MCF 10A (cell line): ENCODE measurements at regions of chr11 and their contacts with region 1.

Region 1: DNA sequence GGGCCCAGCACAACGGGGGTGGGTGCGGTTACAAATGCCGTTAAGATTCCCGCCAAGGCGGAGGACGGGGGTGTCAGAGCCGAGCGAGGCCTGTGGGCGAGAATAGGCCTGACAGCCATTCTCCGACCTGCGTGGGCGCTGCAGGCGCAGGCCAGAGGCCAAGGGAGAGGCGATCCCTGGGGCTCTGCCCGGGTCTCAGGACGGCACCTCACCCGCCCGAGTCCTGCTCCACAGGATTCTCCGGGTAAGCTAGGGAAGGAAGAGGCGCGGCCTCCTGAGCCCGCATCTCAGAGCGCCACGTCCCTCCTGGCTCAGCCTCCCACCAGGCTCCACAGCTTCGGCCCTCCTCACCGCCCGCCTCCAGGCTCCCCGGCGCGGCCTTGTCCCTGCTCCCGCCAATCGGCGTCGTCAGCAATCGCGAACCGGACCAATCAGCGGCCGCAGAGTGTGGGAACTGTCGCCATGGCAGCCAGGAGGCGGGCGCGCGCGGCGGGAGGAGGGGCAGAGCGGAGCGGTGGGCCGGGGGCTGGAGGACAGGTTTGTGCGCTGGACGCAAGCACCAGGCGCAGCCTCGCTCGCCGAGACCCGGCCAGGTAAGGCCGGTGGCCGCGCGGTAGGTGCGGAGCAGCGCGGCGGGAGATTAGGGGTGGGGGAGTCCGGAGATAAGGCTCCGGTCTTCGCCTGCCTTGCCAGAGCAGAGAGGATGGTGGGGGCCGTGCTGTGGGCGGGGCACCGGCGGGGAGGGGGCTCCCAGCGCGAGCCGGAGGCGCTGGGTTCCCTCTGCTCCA is at the start of gene NUCB2:
- DNase-seq: peak; percentile 96
- H3K4me3 Mint-ChIP-seq: peak within 1 kb of the TSS; percentile 98
- H3K27ac Mint-ChIP-seq: peak within 1 kb of the TSS; percentile 77
- H3K4me1 Mint-ChIP-seq: peaks cover 9% of the 10 kb centered on the region
- H3K27me3 Mint-ChIP-seq: no peaks in the 10 kb centered on the region
- CTCF ChIP-seq: no peak
- total RNA-seq, gene NUCB2: 89.4 and 137 TPM in 2 replicates

Region 2: DNA sequence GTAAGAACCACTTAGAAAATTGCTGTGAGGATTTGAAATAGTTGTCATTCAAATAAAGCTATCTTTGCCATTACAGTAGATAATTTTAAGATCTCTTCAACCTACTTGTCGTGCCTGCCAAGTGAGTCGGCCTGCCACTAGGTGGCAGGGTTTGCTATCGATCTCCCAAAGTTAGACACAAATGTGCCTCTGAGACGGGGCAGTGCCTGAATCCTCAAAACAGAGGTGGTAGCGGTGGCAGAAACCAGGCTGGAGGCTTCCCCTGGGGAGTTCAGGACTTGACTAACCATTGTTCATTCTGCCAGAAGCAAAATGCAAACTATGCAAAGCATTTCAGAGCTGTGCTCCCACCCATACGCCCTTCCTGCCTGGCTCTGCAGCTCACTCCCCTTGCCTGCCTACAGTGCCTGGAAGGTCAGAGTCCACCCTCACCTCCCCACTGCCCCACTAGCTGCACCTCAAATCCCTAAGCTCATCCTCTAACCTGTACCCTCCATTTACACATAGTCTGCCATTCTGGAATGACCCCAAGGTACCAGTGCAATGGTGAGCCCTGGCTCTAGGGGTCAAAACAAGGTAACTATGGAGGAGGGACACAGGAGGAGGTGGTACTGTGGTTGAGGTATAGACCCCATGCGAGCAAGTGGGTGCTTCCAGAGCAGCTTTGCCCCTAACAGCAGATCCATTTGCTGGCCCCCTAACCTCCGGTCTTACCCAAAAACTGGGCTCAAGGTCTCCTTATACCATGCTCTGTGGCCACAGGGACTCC is 455.9 kb before region 1 on chr11:
- CTCF ChIA-PET with region 1: no interaction called
- POLR2A ChIA-PET with region 1: no interaction called
- intact Hi-C with region 1: no loop called
- DNase-seq: peak; percentile 78
- H3K4me3 Mint-ChIP-seq: no peak overlapping the region
- H3K27ac Mint-ChIP-seq: no peak overlapping the region
- H3K4me1 Mint-ChIP-seq: peaks cover 5% of the 10 kb centered on the region
- H3K27me3 Mint-ChIP-seq: no peaks in the 10 kb centered on the region
- CTCF ChIP-seq: peak; percentile 63

Region 3: GRCh38 chr11:17230867-17231851 is 45.3 kb before region 1 on chr11:
- CTCF ChIA-PET with region 1: interaction called, 10 read pairs
- POLR2A ChIA-PET with region 1: interaction called, 6 read pairs
- intact Hi-C with region 1: loop called (anchors 2 kb)
- DNase-seq: no peak
- H3K4me3 Mint-ChIP-seq: no peak overlapping the region
- H3K27ac Mint-ChIP-seq: no peak overlapping the region
- H3K4me1 Mint-ChIP-seq: peaks cover 6% of the 10 kb centered on the region
- H3K27me3 Mint-ChIP-seq: no peaks in the 10 kb centered on the region
- CTCF ChIP-seq: no peak

Region 4: GRCh38 chr11:17256512-17256911 is 19.9 kb before region 1 on chr11:
- CTCF ChIA-PET with region 1: interaction called, 3 read pairs
- POLR2A ChIA-PET with region 1: interaction called, 10 read pairs
- intact Hi-C with region 1: no loop called
- DNase-seq: peak; percentile 83
- H3K4me3 Mint-ChIP-seq: peak overlapping the region; percentile 55
- H3K27ac Mint-ChIP-seq: peak overlapping the region; percentile 49
- H3K4me1 Mint-ChIP-seq: peaks cover 13% of the 10 kb centered on the region
- H3K27me3 Mint-ChIP-seq: no peaks in the 10 kb centered on the region
- CTCF ChIP-seq: no peak